AG04450 (cell line): ENCODE measurements at regions of chr12 and their contacts with region 1.

Region 1: GRCh38 chr12:76266797-76267196 is 81.4 kb downstream of the BBS10 start:
- DNase-seq: peak; percentile 73
- H3K4me3 ChIP-seq: no peak overlapping the region; the same call in 1 of the 2 replicates
- H3K27ac ChIP-seq: peak overlapping the region; percentile 42
- H3K27me3 ChIP-seq: no peaks in the 10 kb centered on the region
- CTCF ChIP-seq: no peak

Region 2: GRCh38 chr12:76284816-76285750 is 18.3 kb after region 1 on chr12:
- CTCF ChIA-PET with region 1: interaction called, 3 read pairs
- POLR2A ChIA-PET with region 1: interaction called, 10 read pairs
- DNase-seq: peak; percentile 47
- H3K4me3 ChIP-seq: no peak overlapping the region
- H3K27ac ChIP-seq: peak overlapping the region; percentile 66
- H3K27me3 ChIP-seq: no peaks in the 10 kb centered on the region
- CTCF ChIP-seq: no peak